Heart right ventricle (tissue), 16 donors: ENCODE measurements at regions of chr1 and their contacts with region 1.

Region 1: GRCh38 chr1:29332204-29332603 is 95.9 kb downstream of the PTPRU start:
- DNase-seq: no peak
- ATAC-seq: no peak
- H3K4me3 ChIP-seq: no peak overlapping the region
- H3K27ac ChIP-seq: no peak overlapping the region
- H3K4me1 ChIP-seq: no peaks in the 10 kb centered on the region
- H3K27me3 ChIP-seq: peaks cover 0 to 36% (median 15%) of the 10 kb centered on the region in 7 donors
- CTCF ChIP-seq: peak in 5 of 9 donors; percentile 19 to 43 (median 28)

Region 2: GRCh38 chr1:29245876-29246275 is 86.3 kb before region 1 on chr1:
- intact Hi-C with region 1: loop called in 1 of 10 experiments (anchors 10 kb)
- DNase-seq: no peak
- ATAC-seq: peak in 2 of 8 donors; percentile 50 to 54
- H3K4me3 ChIP-seq: no peak overlapping the region
- H3K27ac ChIP-seq: no peak overlapping the region
- H3K4me1 ChIP-seq: peaks cover 0 to 4% (median 0%) of the 10 kb centered on the region in 9 donors
- H3K27me3 ChIP-seq: no peaks in the 10 kb centered on the region
- CTCF ChIP-seq: peak in 8 of 9 donors; percentile 6 to 47 (median 36)